PC-9 (cell line): ENCODE measurements at regions of chr1 and their contacts with region 1.

Region 1: GRCh38 chr1:112544751-112545150 is 36.0 kb downstream of the WNT2B start:
- DNase-seq: peak in 1 of 2 experiments; percentile 85
- H3K4me3 ChIP-seq: 0 out of 2 replicates have a peak overlapping the region, but pooled peaks have one; percentile 24
- H3K27ac ChIP-seq: peak overlapping the region; percentile 98
- H3K4me1 ChIP-seq: peaks cover 38% of the 10 kb centered on the region
- H3K27me3 ChIP-seq: no peaks in the 10 kb centered on the region
- CTCF ChIP-seq: no peak

Region 2: DNA sequence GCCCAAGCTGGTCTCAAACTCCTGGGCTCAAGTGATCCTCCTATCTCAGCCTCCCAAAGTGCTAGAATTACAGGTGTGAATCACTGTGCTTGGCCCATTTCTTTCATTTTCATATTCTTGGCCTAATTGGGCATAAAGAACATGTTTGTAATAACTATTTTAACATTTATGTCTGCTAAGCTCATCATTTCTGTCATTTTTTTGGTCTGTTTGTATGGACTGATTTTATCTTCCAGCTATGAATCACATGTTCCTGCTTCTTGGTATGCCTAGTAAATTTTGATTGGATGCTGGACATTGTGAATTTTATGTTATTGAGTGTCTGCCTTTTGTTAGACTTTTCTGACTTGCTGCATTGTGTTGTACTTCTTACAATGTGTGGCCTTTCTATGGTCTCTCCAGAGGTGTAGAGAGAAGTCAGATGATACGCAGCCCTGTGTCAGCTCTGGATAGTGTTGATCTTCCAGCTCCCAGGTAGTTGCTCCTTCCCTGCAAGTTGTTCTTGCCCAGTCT is 209.4 kb after region 1 on chr1:
- CTCF ChIA-PET with region 1: no interaction called
- POLR2A ChIA-PET with region 1: no interaction called
- intact Hi-C with region 1: no loop called
- DNase-seq: no peak
- H3K4me3 ChIP-seq: no peak overlapping the region
- H3K27ac ChIP-seq: no peak overlapping the region
- H3K4me1 ChIP-seq: no peaks in the 10 kb centered on the region
- H3K27me3 ChIP-seq: no peaks in the 10 kb centered on the region
- CTCF ChIP-seq: no peak

Region 3: GRCh38 chr1:114511032-114511785 is 1966.5 kb after region 1 on chr1 and contains the start of gene TRIM33:
- CTCF ChIA-PET with region 1: no interaction called
- POLR2A ChIA-PET with region 1: interaction called, 24 read pairs
- intact Hi-C with region 1: no loop called
- DNase-seq: peak; percentile 85 to 89
- H3K4me3 ChIP-seq: peak within 1 kb of the TSS; percentile 93
- H3K27ac ChIP-seq: peak within 1 kb of the TSS; percentile 88
- H3K4me1 ChIP-seq: peaks cover 38% of the 10 kb centered on the region
- H3K27me3 ChIP-seq: no peaks in the 10 kb centered on the region
- CTCF ChIP-seq: no peak
- total RNA-seq, gene TRIM33: 30.0 and 38.7 TPM in 2 replicates